ENCODE measurements at regions of chr13 and their contacts with region 1.

Region 1: DNA sequence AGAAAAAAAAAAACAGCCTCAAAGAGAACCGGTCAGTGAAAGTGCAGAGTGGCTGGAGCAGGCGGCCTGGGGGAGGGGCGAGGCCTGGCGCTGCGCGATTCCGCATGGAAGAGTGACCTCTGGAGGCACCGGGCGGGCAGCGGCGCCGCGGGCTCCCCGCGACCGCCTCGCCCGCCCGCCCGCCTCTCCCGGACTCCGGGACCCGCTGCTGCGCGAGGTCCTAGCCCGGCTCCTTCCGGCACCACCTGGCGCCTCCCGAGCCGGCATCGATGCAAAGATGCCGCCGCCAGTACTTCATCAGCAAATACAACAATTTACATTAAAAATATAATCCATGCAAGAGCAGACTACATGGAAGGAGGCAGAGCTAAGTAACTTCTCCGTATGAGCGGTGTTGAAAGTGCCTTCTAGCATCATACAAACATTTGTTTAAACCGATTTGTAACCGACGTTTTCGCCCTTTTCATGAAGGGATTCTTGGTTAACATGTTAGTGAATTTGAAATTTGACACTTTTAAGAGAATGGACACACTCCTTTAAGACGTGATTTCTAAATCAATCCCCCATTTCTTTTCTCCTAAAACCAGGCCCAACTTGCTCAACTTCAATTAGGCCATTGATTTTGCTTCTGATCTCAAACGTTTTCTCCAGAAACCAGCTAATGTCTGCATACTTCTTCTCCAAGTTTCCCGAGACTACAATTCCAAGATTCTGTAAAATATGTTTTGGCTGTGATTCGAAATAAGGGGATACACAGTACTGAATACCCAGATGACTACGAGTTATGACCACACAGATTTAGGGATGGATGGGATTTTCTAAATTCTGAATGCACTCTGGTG is 2.1 kb downstream of the EFNB2 start:
- DNase-seq: peak; percentile 89 to 92 (median 92)
- ATAC-seq: peak; percentile 58
- H3K4me3 ChIP-seq: peak overlapping the region; percentile 77
- H3K4me1 ChIP-seq: peaks cover 27% of the 10 kb centered on the region
- CTCF ChIP-seq: peak; percentile 61

Region 2: DNA sequence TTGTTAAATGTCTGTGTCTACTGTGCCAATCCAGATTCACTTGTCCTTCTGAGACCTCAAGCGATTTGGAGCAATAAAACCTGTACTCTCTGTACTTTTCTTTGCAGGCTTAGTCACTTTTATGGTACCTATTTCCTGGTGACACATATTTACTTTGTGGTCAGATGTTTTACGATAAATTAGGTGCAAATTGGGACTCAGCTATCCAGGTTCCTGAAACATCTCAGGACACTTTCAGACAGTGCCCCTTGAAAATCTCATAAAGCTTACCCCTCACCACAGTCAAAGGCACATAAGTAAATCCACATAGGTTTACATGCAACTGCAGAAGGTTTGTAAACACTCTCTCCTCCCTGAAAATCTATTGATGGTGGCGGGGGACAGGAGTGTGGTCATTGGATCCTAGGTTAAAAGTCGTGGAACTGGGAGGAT is 436.6 kb before region 1 on chr13:
- intact Hi-C with region 1: loop called in 1 of 2 experiments (anchors 5 kb)
- DNase-seq: peak in 1 of 3 donors; percentile 56
- ATAC-seq: peak; percentile 70
- H3K4me3 ChIP-seq: no peak overlapping the region
- H3K4me1 ChIP-seq: peaks cover 24% of the 10 kb centered on the region
- CTCF ChIP-seq: no peak

Measured in mucosa of descending colon (tissue), 3 donors.